Sigmoid colon (tissue), 7 donors: ENCODE measurements at regions of chr20 and their contacts with region 1.

Region 1: DNA sequence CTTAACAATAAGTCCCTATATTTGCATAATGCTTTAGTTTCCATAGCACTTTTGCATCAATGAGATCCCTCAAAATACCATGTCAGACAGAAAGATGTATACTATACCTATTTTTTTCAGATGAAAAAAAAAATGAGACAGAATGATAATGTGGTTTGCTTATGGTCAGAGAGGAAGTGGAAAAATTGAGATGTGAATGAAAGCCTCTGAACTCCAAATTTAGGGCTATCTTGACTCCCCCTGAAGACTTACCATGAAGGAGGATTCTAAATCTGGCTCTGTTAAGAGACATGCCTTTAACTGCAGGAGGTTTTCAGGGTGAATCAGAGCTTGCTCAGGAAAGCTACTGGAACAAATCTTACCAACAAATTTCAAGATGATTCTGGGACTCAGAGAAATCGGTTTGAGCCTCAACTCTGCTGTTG is 176.2 kb downstream of the ISM1 start:
- DNase-seq: no peak
- H3K4me3 ChIP-seq: no peak overlapping the region
- H3K27ac ChIP-seq: peak overlapping the region in 3 of 4 donors; percentile 52 to 62 (median 55)
- H3K4me1 ChIP-seq: peaks cover 0 to 55% (median 25%) of the 10 kb centered on the region in 4 donors
- H3K27me3 ChIP-seq: no peaks in the 10 kb centered on the region
- CTCF ChIP-seq: no peak
- EP300 ChIP-seq: no peak
- POLR2A ChIP-seq: no peak

Region 2: DNA sequence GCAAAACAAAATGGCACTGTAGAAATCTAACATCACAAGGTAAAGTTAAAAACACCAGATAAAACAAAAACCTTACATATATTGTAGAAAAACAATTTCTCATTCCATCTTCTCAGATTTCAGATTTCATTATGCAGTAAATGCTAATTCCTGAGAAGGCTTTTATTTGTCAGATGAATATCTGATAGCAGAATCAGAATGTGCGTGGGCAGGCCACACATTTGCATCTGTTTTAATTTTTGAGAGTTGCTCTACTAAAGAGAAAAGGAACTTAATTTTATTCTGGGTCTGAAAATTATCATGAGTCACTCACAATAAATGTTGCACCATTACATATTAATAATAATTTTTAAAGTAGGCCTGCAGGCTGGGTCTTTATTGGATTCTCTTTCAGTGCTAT is 717.9 kb before region 1 on chr20:
- intact Hi-C with region 1: no loop called
- DNase-seq: no peak
- H3K4me3 ChIP-seq: no peak overlapping the region
- H3K27ac ChIP-seq: no peak overlapping the region
- H3K4me1 ChIP-seq: no peaks in the 10 kb centered on the region
- H3K27me3 ChIP-seq: no peaks in the 10 kb centered on the region
- CTCF ChIP-seq: no peak
- EP300 ChIP-seq: no peak
- POLR2A ChIP-seq: no peak

Region 3: GRCh38 chr20:13355411-13355810 is 41.9 kb before region 1 on chr20:
- intact Hi-C with region 1: loop called (anchors 5 kb)
- DNase-seq: peak; percentile 84
- H3K4me3 ChIP-seq: no peak overlapping the region
- H3K27ac ChIP-seq: peak overlapping the region; percentile 20 to 74 (median 49)
- H3K4me1 ChIP-seq: peaks cover 0 to 23% (median 12%) of the 10 kb centered on the region in 4 donors
- H3K27me3 ChIP-seq: no peaks in the 10 kb centered on the region
- CTCF ChIP-seq: no peak
- EP300 ChIP-seq: peak; percentile 57 to 90 (median 88)
- POLR2A ChIP-seq: no peak